GM10248 (cell line): ENCODE measurements at regions of chr18 and their contacts with region 1.

Region 1: GRCh38 chr18:57881818-57882413 is 78.8 kb upstream of the ATP8B1 start:
- DNase-seq: peak; percentile 62
- CTCF ChIP-seq: peak; percentile 86

Region 2: DNA sequence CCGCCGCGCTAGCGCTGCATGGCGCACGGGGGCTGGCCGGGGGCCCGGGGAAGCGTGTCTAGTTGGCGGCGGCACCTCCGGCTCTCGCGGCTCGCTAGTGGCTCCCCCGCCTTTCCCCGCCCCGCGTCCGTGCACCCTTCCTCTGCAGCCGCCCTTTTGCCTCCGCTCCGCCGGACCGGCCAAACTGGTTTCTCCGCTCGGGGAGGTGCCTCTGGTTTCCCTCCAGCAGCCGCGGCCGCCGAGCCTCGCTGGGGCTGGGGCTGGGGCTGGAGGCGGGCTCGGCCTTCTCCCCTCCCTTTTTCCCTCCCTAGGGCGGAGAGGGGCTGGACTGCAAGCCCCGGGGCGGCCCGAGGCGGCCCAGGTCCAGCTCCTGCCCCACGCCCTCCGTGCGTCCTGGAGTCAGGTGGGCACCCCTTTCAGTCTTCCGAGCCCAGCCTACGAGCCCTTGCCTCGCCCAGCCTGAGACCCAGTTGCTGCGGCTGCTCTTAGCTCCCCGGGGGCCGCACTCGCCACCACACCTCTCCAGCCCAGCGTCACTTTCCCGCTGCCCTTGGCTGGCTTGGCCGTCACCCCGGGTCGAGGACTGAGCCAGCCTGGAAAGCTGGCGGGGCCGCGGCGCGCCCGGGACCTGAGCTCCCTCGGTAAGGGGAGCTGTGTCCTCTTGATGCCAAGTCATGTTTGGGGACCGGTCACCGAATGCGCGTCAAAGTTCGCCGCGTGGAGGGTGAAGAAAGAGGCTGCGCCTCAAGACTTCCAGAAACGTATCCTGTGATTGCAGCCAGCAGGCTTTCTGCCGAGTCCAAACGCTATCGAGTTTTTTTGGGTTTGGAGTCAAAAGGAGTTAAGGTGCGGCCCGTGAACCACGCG is 78.6 kb before region 1 on chr18 and contains the start of gene ATP8B1:
- CTCF ChIA-PET with region 1: no interaction called
- POLR2A ChIA-PET with region 1: no interaction called
- DNase-seq: peak; percentile 35
- CTCF ChIP-seq: no peak

Region 3: DNA sequence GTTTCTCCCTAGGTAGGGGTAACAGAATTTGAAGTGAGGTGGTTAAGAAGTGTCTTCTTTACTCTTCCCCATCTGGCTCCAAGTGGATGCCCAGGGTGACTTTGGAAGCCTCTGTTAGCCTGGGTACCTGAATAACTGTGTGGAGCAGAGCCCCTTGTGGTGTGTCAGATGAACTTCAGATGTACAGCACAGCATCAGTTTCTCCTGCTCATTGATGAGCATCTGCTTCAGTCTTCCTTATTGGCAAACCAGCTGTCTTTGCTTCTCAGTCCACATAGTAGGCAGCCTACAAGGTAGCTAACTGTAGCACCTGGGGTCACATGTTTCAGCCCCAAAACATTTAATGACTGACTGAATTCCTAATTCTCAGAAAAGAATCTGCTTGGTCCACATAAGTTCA is 22.6 kb before region 1 on chr18:
- CTCF ChIA-PET with region 1: interaction called, 14 read pairs
- POLR2A ChIA-PET with region 1: no interaction called
- DNase-seq: peak; percentile 23
- CTCF ChIP-seq: peak; percentile 36